ENCODE measurements at regions of chr19 and their contacts with region 1.

Region 1: DNA sequence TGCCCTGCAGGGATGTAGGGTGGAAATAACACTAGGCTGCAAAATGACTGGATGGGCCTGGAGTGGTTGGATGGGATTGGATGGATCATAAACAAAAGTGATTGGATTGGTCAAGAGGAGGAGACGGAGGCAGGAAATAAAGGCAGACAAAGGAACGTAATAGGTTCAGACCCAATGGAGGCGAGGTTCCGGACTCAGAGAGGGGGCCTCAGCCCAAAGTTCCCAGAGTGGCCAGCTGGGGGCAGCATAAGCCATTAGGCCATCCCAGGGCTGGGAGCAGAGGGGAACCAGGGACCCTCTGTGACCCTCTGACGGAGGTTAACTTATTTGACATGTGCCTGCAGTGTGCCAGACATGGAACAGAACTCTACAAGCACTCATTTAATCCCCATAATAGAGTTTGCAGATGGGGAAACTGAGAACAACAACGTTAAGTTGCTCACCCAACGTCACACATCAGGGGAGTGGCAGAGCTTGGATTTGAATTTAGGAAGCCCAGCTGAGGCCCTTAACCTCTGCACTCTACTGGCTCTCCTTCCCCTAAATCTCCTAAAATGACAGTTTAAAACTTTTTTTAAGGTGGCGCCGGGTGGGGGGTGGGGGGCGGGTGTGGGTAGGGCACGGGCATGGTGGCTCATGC is 15.3 kb upstream of the MAP1S start:
- DNase-seq: peak; percentile 84

Region 2: DNA sequence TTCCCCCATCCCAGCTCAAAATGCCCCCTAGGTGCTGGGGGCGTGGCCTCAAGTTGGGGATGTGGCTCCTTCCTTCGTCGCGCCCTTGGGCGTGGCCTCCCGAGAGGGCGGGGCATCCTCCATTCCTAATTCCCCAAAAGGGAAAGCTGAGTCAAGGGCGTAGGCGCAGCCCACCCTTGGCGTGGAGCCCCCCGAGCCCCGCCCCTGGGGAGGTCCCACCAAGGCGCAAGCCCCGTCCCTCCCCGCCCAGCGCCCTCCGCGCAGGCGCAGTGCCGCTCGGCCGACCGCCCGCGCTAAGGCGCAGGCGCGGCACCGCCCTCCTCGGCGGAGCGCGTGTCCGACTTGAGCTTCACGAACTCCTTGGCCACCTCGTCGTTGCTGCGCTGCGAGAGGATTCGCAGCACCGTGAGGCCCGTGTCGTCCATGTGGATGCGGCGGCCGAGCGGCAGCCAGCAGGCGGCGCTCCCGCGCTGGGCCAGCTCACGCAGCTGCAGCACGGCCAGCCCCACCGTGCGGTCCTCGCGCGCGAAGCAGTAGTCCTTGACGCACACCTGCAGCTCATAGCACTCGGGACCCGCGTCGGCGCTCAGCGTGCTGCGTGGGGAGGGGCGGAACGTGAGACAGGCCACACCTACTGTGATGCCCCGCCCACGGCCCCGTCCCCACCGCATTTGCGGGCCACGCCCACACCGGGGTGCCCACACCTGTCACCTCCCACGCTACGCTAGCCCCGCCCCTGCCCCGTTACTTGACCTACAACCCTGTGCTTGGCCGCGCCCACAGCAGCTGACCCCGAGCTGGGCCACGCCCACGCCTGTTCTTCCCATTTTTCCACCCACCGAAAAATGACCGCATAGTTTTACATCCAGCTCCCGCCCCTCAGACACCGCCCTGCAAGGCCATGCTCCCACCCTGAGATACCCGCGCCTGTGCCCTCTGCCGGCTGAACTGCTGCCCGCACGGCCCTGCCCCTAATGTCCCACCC is 97.9 kb before region 1 on chr19:
- intact Hi-C with region 1: no loop called
- DNase-seq: peak; percentile 86

Region 3: DNA sequence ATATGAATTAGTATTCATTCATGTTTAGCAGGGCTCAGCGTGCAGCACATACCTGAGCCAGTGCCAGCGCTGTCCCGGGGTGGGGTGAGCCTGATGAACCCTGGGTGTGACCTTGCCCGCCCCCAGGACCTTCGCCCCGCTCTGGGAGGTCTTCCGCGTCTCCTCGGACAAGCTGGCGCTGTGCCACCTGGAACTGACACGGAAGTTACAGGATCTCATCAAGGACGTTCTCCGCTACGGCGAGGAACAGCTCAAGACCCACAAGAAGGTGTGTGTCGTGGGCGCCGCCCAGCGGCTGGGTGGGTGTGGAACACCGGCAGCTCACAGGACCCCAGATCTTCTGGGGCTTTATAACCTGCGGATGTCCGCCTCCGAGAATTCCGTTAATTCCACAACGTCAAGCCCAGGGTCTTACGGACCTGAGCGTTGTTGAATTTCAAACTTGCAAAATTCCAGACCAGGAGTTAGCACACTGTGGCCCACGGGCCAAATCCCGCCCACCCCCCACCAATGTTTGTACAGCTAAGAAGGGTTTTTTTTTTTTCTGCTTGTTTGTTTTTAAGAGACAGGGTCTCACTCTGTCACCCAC is 62.7 kb after region 1 on chr19:
- intact Hi-C with region 1: loop called (anchors 5 kb)
- DNase-seq: peak; percentile 89